ENCODE measurements at regions of chr6 and their contacts with region 1.

Region 1: GRCh38 chr6:30489081-30490025 is at the start of gene HLA-E:
- DNase-seq: peak; percentile 95
- CTCF ChIP-seq: no peak

Region 2: DNA sequence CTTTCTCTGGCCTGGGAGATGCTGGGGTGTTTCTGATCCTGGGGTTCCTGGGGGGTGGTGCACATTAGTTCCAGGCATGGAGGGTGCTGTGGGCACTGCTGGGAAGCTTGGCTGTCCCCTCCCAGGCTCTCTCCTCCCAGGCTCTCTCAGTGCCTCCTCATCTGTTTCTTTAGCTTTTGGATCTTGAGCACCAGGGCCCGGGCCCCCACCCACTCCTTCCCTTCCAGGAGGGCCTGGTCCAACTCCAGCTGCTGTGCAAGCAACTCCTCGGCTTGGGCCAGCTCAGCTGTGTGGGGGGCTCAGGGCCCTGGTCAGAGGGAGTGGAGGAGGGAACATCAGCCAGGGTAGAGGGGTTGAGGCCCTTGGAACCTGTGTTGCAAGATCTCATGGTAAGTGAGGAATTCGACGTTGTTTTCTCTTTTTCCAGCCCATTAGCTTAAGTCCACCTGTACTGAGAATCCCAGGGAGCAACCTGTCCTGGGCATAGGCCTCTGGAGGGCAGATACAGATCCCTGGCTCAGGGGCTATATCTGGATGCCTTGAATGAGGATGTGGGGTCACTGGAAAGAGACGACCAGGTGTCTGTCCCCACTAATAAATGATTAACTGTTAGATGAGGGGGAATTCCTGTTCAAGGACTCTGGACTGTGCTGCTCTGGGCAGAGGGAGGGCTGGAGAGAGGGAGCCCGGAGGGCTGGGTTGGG is 581.6 kb before region 1 on chr6:
- in situ Hi-C with region 1: no loop called
- DNase-seq: no peak
- CTCF ChIP-seq: no peak

Region 3: GRCh38 chr6:30227763-30228487 is 261.4 kb before region 1 on chr6:
- in situ Hi-C with region 1: no loop called
- DNase-seq: peak; percentile 45
- CTCF ChIP-seq: no peak

Region 4: GRCh38 chr6:30533460-30534294 is 44.3 kb after region 1 on chr6:
- in situ Hi-C with region 1: loop called (anchors 5 kb)
- DNase-seq: no peak
- CTCF ChIP-seq: no peak